Heart right ventricle (tissue), 16 donors: ENCODE measurements at regions of chr4 and their contacts with region 1.

Region 1: GRCh38 chr4:125663896-125664767 is 349.4 kb downstream of the FAT4 start:
- DNase-seq: no peak
- ATAC-seq: no peak
- H3K4me3 ChIP-seq: no peak overlapping the region
- H3K27ac ChIP-seq: no peak overlapping the region
- H3K4me1 ChIP-seq: no peaks in the 10 kb centered on the region
- H3K27me3 ChIP-seq: no peaks in the 10 kb centered on the region
- CTCF ChIP-seq: no peak

Region 2: GRCh38 chr4:124745985-124746801 is 917.9 kb before region 1 on chr4:
- intact Hi-C with region 1: loop called in 1 of 10 experiments (anchors 10 kb)
- DNase-seq: peak in 1 of 2 donors; percentile 6
- ATAC-seq: peak in 5 of 8 donors; percentile 29 to 69 (median 39)
- H3K4me3 ChIP-seq: peak overlapping the region in 6 of 10 donors; percentile 3 to 30 (median 27)
- H3K27ac ChIP-seq: peak overlapping the region in 3 of 10 donors; percentile 1 to 29 (median 13)
- H3K4me1 ChIP-seq: peaks cover 0 to 14% (median 0%) of the 10 kb centered on the region in 9 donors
- H3K27me3 ChIP-seq: no peaks in the 10 kb centered on the region
- CTCF ChIP-seq: no peak

Region 3: DNA sequence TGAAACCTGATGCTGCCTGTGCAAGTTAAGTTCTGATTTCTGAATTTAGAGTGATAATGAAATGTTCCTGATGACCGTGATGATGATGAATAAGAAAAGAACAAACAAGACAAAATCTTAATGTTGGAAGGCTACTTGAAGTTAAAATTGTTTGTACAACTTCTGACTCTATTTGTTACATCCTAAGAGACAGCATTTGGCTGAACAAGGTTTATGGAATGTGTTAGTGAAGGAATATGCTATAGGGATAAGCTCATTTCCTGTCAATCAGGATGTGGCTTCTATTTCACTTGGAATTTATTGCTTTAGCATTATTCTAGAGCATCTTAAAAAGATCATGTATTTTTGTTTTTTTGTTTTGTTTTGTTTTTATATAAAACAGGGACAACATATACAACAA is 81.8 kb before region 1 on chr4:
- intact Hi-C with region 1: no loop called
- DNase-seq: no peak
- ATAC-seq: no peak
- H3K4me3 ChIP-seq: no peak overlapping the region
- H3K27ac ChIP-seq: no peak overlapping the region
- H3K4me1 ChIP-seq: no peaks in the 10 kb centered on the region
- H3K27me3 ChIP-seq: no peaks in the 10 kb centered on the region
- CTCF ChIP-seq: no peak

Region 4: GRCh38 chr4:126004941-126005340 is 340.8 kb after region 1 on chr4:
- intact Hi-C with region 1: no loop called
- DNase-seq: no peak
- ATAC-seq: no peak
- H3K4me3 ChIP-seq: no peak overlapping the region
- H3K27ac ChIP-seq: no peak overlapping the region
- H3K4me1 ChIP-seq: no peaks in the 10 kb centered on the region
- H3K27me3 ChIP-seq: no peaks in the 10 kb centered on the region
- CTCF ChIP-seq: no peak

Region 5: DNA sequence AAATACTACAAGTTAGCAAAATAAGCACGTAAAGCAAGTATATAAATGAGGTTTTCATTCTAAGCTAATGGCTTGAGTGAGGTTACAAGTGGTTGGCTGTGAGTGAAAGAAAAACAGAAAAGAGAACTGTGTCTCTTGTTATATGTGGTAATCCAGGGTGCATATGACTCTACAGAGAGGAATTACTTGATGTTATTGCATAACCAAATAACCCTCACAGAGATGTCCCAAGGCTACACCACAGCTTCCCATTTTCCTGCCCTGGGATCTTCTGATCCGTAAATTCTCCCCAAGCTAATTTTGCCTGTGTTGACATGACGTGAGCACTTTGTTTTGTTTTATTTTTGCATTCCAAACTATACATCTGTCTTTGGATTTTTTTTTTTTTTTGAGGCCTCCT is 1498.6 kb after region 1 on chr4:
- intact Hi-C with region 1: no loop called
- DNase-seq: no peak
- ATAC-seq: peak in 2 of 8 donors; percentile 34 to 65
- H3K4me3 ChIP-seq: no peak overlapping the region
- H3K27ac ChIP-seq: no peak overlapping the region
- H3K4me1 ChIP-seq: no peaks in the 10 kb centered on the region
- H3K27me3 ChIP-seq: no peaks in the 10 kb centered on the region
- CTCF ChIP-seq: no peak